Uterus (tissue), 4 donors: ENCODE measurements at regions of chr10 and their contacts with region 1.

Region 1: GRCh38 chr10:29304264-29305030 is 15.6 kb downstream of the LYZL1 start:
- DNase-seq: peak; percentile 70 to 73
- H3K4me3 ChIP-seq: no peak overlapping the region
- H3K27ac ChIP-seq: no peak overlapping the region
- H3K4me1 ChIP-seq: no peaks in the 10 kb centered on the region
- H3K27me3 ChIP-seq: no peaks in the 10 kb centered on the region
- CTCF ChIP-seq: peak; percentile 82 to 93 (median 84)
- POLR2A ChIP-seq: no peak

Region 2: DNA sequence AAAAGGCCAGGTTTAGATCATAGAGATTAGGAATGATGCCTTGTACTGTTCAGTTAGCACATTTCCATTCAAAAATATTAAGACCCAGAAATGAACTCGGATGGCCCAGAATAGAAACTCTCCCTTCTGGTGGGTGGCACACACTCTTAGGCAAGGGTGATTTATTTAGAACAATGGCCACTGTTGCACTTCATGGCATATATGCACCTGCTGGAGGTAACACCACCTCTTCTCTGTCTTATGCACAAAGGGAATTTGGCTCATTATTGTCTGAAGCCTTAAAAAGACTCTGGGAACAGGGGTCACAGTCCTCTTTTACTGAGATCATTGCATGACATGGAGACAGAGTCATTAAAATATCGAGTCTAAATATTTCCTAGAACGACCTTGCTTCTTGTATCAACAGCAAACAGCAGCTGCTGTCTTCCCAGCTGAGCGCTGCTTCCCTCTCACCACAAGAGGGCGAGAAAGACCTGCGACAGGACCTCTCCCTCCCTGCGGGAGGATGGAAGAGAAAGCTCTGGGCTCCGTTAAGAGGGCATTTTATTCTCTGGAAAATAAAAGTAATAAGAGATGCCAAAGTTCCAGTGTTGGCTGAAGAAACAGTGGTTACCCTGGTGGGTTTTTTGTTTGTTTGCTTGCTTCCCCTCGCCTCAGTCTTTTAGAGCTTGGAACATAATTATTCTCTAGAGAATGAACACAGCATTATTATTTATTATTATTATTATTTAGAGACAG is 640.7 kb before region 1 on chr10:
- intact Hi-C with region 1: loop called (anchors 2 kb)
- DNase-seq: peak; percentile 81 to 84
- H3K4me3 ChIP-seq: no peak overlapping the region
- H3K27ac ChIP-seq: no peak overlapping the region
- H3K4me1 ChIP-seq: no peaks in the 10 kb centered on the region
- H3K27me3 ChIP-seq: no peaks in the 10 kb centered on the region
- CTCF ChIP-seq: peak; percentile 92 to 98 (median 94)
- POLR2A ChIP-seq: no peak